Activated naive CD8-positive, alpha-beta T cell treated with anti-CD3 and anti-CD28 coated beads, Interleukin-2, amount 10 ng/mL, durations not matched to agents 7 days and 5 days (primary cell): ENCODE measurements at regions of chr10 and their contacts with region 1.

Region 1: DNA sequence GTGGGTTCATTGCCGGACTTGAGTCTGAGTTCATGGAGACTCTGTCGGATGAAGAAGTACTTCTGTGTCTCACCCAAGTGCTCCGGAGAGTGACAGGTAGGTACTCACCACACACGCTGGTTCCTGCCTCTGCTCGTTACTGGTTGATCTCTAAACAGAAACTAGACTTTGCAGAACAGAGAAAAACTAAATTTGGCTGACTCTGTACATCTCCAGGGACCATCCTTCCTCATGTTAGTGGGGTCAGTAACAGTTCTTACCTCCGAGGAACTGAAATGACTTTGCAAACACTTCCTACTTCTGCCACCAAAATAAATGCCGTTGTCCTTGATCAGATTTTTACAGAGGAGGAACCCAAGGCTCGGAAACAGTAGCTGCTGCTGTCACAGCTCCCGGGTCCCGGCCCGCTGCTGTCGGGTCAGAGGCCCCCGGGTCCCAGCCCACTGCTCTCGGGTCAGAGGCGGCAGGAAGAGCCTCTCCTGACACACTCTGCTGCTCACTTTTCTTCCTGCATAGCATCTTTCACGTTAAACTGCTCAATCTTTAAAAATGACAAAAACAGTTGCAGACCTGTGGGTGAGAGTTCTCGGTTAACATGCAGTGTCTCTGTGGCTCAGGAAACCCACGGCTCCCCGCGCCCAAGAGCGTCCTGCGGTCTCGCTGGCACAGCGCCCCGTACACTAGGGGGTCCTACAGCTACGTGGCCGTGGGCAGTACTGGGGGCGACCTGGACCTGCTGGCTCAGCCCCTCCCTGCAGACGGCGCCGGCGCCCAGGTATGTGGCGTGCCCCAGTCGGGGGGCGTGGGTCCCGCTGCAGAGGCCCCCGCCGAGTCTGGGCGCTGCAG is 4.8 kb upstream of the MTG1 start:
- DNase-seq: peak; percentile 64
- ATAC-seq: peak; percentile 59
- H3K4me3 Mint-ChIP-seq: peak overlapping the region; percentile 85
- H3K27ac Mint-ChIP-seq: peak overlapping the region; percentile 99
- H3K4me1 Mint-ChIP-seq: peaks cover 31% of the 10 kb centered on the region
- H3K27me3 Mint-ChIP-seq: no peaks in the 10 kb centered on the region

Region 2: DNA sequence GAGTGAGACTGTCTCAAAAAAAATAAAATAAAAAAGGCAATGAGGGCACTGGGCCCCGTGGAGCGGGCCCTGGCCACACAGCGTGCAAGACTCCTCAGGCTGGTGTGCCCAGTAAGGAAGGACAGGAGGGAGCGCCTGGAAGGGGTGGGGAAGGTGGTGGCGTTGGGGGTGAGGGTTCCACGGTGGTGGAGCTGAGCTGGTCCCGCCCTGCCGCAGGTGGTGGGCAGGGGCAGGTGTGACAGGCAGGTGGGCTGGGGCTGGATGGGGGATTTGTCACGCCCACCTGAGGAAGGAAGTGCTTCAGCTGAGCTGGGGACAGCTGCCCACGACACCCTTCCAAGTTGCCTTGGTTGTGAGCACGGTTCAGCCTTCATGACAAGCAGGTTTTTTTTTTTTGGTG is 42.8 kb before region 1 on chr10:
- POLR2A ChIA-PET with region 1: no interaction called
- DNase-seq: no peak
- ATAC-seq: no peak
- H3K4me3 Mint-ChIP-seq: no peak overlapping the region
- H3K27ac Mint-ChIP-seq: no peak overlapping the region
- H3K4me1 Mint-ChIP-seq: no peaks in the 10 kb centered on the region
- H3K27me3 Mint-ChIP-seq: peaks cover 24% of the 10 kb centered on the region

Region 3: GRCh38 chr10:133373104-133373624 is 16.0 kb before region 1 on chr10 and contains the start of gene ECHS1:
- POLR2A ChIA-PET with region 1: interaction called, 18 read pairs
- DNase-seq: peak; percentile 99
- ATAC-seq: peak; percentile 97
- H3K4me3 Mint-ChIP-seq: peak within 1 kb of the TSS; percentile 88
- H3K27ac Mint-ChIP-seq: peak within 1 kb of the TSS; percentile 82
- H3K4me1 Mint-ChIP-seq: peaks cover 8% of the 10 kb centered on the region
- H3K27me3 Mint-ChIP-seq: peaks cover 12% of the 10 kb centered on the region
- total RNA-seq, gene ECHS1: 33.5 to 36.1 TPM

Region 4: GRCh38 chr10:133378251-133379096 is 10.7 kb before region 1 on chr10:
- POLR2A ChIA-PET with region 1: interaction called, 18 read pairs
- DNase-seq: peak; percentile 82
- ATAC-seq: peak; percentile 58
- H3K4me3 Mint-ChIP-seq: peak overlapping the region; percentile 76
- H3K27ac Mint-ChIP-seq: no peak overlapping the region
- H3K4me1 Mint-ChIP-seq: peaks cover 9% of the 10 kb centered on the region
- H3K27me3 Mint-ChIP-seq: peaks cover 12% of the 10 kb centered on the region

Region 5: GRCh38 chr10:133400624-133401424 is 11.6 kb after region 1 on chr10:
- POLR2A ChIA-PET with region 1: interaction called, 12 read pairs
- DNase-seq: no peak
- ATAC-seq: peak; percentile 90
- H3K4me3 Mint-ChIP-seq: peak overlapping the region; percentile 58
- H3K27ac Mint-ChIP-seq: peak overlapping the region; percentile 83
- H3K4me1 Mint-ChIP-seq: peaks cover 27% of the 10 kb centered on the region
- H3K27me3 Mint-ChIP-seq: no peaks in the 10 kb centered on the region